B cell (primary cell): ENCODE measurements at regions of chr19 and their contacts with region 1.

Region 1: DNA sequence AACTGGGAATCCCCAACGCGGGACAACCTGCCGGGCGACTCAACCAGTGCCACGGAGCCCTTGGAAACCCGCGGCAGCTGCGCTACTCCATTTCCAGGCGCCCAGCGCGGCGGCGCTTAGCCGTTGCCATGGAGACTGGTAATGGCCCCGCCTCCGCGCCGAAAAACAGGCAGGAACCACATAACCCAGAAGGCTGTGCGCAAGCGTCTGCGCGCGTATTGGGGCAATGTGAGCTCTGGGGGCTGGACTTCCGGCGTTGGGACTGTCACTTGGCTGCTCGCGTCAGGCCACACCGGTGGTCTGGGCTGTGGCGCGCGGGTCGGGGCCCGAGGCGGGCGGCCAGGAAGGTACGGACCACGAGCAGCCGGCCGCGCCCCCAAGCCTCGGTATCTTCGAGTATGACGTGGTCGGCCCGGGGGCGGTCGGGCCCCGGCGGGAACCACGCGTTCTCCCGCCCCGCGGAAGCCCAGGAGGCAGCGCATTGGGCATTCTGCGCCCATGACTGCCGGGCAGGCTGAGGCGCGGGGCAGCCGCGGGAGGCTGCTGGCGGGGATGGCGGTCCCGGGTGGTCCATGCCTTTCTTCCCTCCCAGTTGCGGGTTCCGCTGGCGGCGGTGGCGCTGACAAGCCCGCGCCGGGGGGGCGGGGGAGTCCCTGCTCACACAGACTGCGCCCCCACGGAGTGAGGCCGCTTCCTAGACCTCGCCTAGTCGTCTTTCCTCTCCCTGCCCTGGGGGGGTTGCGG is at the start of gene ZNF324B:
- DNase-seq: peak; percentile 97
- ATAC-seq: peak; percentile 97
- H3K4me3 ChIP-seq: peak within 1 kb of the TSS; percentile 55 to 81 (median 73)
- H3K4me3 Mint-ChIP-seq: peak within 1 kb of the TSS; percentile 93
- H3K27ac ChIP-seq: peak within 1 kb of the TSS in 1 of 2 donors; percentile 66
- H3K27ac Mint-ChIP-seq: peak within 1 kb of the TSS; percentile 85
- H3K4me1 ChIP-seq: peaks cover 5 to 12% of the 10 kb centered on the region in 2 donors
- H3K4me1 Mint-ChIP-seq: peaks cover 20% of the 10 kb centered on the region
- H3K27me3 ChIP-seq: peaks cover 0 to 24% (median 2%) of the 10 kb centered on the region in 4 experiments
- H3K27me3 Mint-ChIP-seq: peaks cover 13% of the 10 kb centered on the region
- CTCF ChIP-seq: no peak
- total RNA-seq, gene ZNF324B: 15.0 and 17.4 TPM in 2 replicates

Region 2: DNA sequence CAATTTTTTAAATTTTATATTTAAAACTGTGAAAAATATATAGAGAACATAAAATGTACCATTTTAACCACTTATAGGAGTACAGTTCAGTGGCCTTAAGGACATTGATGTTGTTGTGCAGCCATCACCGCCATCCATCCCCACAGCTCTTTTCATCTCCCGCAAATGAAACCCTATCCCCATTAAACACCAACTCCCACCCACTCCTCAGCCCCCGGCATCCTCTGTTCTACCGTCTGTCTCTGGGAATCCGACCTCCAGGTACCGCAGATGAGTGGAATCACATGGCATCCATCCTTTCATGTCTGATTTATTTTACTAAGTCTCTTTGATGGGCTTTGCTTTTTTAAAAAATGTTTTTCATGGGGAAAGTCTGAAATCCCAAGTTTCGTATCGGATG is 1832.4 kb before region 1 on chr19:
- CTCF ChIA-PET with region 1: no interaction called
- POLR2A ChIA-PET with region 1: no interaction called
- intact Hi-C with region 1: no loop called
- DNase-seq: no peak
- ATAC-seq: no peak
- H3K4me3 ChIP-seq: no peak overlapping the region
- H3K4me3 Mint-ChIP-seq: no peak overlapping the region
- H3K27ac ChIP-seq: no peak overlapping the region
- H3K27ac Mint-ChIP-seq: no peak overlapping the region
- H3K4me1 ChIP-seq: no peaks in the 10 kb centered on the region
- H3K4me1 Mint-ChIP-seq: no peaks in the 10 kb centered on the region
- H3K27me3 ChIP-seq: no peaks in the 10 kb centered on the region
- H3K27me3 Mint-ChIP-seq: no peaks in the 10 kb centered on the region
- CTCF ChIP-seq: no peak

Region 3: GRCh38 chr19:58386576-58387337 is 64.8 kb before region 1 on chr19 and contains the start of gene RPS5:
- CTCF ChIA-PET with region 1: no interaction called
- POLR2A ChIA-PET with region 1: no interaction called
- intact Hi-C with region 1: loop called (anchors 1 kb)
- DNase-seq: peak; percentile 98
- ATAC-seq: peak; percentile 90
- H3K4me3 ChIP-seq: peak within 1 kb of the TSS; percentile 71 to 87 (median 76)
- H3K4me3 Mint-ChIP-seq: peak within 1 kb of the TSS; percentile 97
- H3K27ac ChIP-seq: peak within 1 kb of the TSS; percentile 94 to 95
- H3K27ac Mint-ChIP-seq: peak within 1 kb of the TSS; percentile 99
- H3K4me1 ChIP-seq: peaks cover 27 to 33% of the 10 kb centered on the region in 2 donors
- H3K4me1 Mint-ChIP-seq: peaks cover 44% of the 10 kb centered on the region
- H3K27me3 ChIP-seq: no peaks in the 10 kb centered on the region
- H3K27me3 Mint-ChIP-seq: no peaks in the 10 kb centered on the region
- CTCF ChIP-seq: no peak
- total RNA-seq, gene RPS5: 1,234 and 1,311 TPM in 2 replicates

Region 4: GRCh38 chr19:58543826-58544590 is 92.5 kb after region 1 on chr19 and contains the start of gene TRIM28:
- CTCF ChIA-PET with region 1: no interaction called
- POLR2A ChIA-PET with region 1: no interaction called
- intact Hi-C with region 1: no loop called
- DNase-seq: peak; percentile 100
- ATAC-seq: peak; percentile 84
- H3K4me3 ChIP-seq: peak within 1 kb of the TSS; percentile 67 to 87 (median 82)
- H3K4me3 Mint-ChIP-seq: peak within 1 kb of the TSS; percentile 97
- H3K27ac ChIP-seq: peak within 1 kb of the TSS; percentile 96
- H3K27ac Mint-ChIP-seq: peak within 1 kb of the TSS; percentile 99
- H3K4me1 ChIP-seq: peaks cover 17 to 31% of the 10 kb centered on the region in 2 donors
- H3K4me1 Mint-ChIP-seq: peaks cover 29% of the 10 kb centered on the region
- H3K27me3 ChIP-seq: peaks cover 0 to 14% (median 0%) of the 10 kb centered on the region in 4 experiments
- H3K27me3 Mint-ChIP-seq: peaks cover 15% of the 10 kb centered on the region
- CTCF ChIP-seq: no peak
- total RNA-seq, gene TRIM28: 370 and 394 TPM in 2 replicates